ENCODE measurements at regions of chr6 and their contacts with region 1.

Region 1: GRCh38 chr6:27161946-27162603 is 85.4 kb upstream of the PRSS16 start:
- DNase-seq: peak in 1 of 2 donors; percentile 16
- ATAC-seq: no peak

Region 2: DNA sequence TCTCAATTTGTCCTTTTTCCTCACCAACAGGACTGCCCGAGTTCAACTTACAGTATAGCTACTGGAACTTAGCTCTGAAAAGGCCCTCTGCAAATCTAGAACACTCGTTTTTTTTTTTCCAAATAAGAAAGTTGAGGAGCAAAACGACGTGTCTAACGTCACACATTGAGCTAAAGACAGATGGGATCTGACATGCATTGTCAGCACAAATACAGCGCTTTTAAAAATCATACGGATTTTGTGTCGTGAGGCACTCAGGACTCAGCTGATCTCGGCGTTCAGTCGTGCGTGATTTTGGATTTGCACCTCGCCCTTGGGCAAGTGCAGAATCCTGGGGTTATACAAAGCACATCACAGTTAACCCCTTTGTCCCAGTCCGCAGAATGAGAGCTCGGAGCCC is 407.9 kb before region 1 on chr6:
- intact Hi-C with region 1: no loop called
- DNase-seq: no peak
- ATAC-seq: no peak

Region 3: DNA sequence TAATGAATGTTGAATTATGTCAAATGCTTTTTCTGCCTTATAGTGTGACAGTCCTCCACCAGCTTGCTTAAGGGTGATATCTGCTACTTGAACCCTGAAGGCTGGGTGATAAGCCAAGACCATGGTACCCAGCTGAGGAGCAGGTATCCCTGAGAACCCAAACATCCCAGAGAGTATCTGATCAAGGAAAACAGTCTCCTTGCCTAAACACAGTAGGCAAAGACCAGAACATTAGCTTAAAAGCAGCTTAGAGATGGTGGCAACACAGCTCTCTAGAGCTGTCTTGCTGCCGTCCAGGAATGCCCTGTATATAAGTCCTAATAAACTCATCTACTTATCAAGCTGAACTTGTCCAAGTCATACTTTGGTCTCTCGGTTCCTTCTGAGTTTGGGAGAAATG is 42.3 kb before region 1 on chr6:
- intact Hi-C with region 1: loop called in 1 of 2 experiments (anchors 5 kb)
- DNase-seq: no peak
- ATAC-seq: no peak

Region 4: DNA sequence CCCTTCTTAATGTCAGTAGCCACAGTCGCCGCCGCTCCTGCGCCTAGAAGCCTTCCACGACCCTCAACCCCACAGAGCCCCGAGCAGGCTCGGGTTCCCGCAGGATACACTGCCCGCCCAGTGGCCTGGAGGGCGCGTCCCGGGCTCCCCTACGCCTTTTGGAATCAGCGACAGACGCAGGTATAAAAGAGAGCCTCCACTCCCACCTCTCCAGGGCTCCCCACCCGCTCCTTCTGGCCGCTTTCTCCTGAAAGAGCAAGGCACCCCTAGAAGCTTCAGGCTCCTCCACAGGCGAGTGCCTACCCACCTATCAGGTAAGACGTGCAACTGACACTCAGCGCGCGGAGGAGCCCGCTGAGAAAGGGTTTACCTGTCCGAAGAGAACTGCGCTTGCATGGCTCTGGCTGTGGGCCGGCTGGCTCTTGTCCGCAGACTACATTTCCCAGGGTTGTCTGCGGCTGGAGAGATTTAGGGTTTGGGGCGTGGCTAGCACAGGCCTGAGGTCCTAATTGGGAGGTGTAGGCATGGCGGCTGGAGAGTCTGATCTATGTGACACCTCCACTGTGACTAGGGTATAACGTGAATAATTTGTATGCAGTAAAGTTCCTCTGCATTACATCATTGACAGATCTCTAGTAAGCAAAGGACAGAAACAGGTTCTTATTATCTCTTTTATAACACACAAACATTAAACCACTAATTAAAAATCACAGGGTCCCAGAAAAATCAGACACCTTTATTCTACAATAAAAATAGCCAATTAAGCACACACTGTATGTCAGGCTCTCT is 212.9 kb after region 1 on chr6:
- intact Hi-C with region 1: no loop called
- DNase-seq: peak; percentile 82 to 84
- ATAC-seq: peak; percentile 96